Aorta (tissue), 5 donors: ENCODE measurements at regions of chr2 and their contacts with region 1.

Region 1: GRCh38 chr2:170873035-170873692 is 55.9 kb upstream of the GORASP2 start:
- DNase-seq: peak; percentile 76 to 89
- ATAC-seq: peak; percentile 86
- H3K4me3 ChIP-seq: no peak overlapping the region
- H3K27ac ChIP-seq: no peak overlapping the region
- H3K4me1 ChIP-seq: no peaks in the 10 kb centered on the region
- H3K27me3 ChIP-seq: no peaks in the 10 kb centered on the region

Region 2: DNA sequence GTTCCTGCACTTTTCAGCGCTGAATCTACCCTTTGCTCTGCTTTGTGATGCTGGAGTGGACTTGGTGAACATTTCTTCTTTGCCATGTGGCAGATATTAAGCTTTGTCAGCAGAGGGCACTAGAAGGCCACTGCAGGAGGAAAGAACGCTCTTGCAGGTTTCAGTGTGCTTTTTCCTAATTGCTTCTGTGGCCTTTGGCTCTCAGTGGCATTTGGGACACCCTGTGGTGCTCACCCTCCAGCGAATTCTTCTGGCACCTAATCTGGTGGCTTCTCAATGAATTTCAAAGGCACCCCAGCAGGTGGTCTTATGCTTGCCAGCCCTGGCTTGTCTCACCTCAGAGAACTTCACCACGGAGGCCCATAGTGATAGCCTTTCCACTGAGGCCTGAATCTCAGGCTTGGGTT is 548.5 kb before region 1 on chr2:
- intact Hi-C with region 1: loop called in 1 of 2 experiments (anchors 5 kb)
- DNase-seq: no peak
- ATAC-seq: no peak
- H3K4me3 ChIP-seq: no peak overlapping the region
- H3K27ac ChIP-seq: no peak overlapping the region
- H3K4me1 ChIP-seq: no peaks in the 10 kb centered on the region
- H3K27me3 ChIP-seq: no peaks in the 10 kb centered on the region

Region 3: DNA sequence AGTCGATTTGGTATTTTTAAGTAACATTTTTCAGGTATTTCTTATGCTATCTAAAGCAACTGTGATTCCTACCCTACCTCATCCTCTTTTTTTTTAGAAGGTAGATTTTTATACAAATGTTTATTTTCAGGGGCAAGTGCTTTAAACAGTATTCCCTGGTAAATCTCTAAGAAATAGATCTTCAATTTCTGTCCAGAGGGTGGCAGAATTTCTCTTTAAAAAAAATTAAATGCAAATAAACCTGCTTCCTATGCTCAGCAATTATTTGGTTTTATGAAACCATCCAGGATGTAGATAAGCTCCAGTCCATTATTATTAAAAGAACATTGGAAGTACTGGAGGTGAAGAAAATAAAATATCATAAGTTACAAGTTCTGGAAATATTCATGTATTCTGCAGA is 503.3 kb before region 1 on chr2:
- intact Hi-C with region 1: loop called in 1 of 2 experiments (anchors 2 kb)
- DNase-seq: no peak
- ATAC-seq: no peak
- H3K4me3 ChIP-seq: no peak overlapping the region
- H3K27ac ChIP-seq: no peak overlapping the region
- H3K4me1 ChIP-seq: no peaks in the 10 kb centered on the region
- H3K27me3 ChIP-seq: no peaks in the 10 kb centered on the region

Region 4: DNA sequence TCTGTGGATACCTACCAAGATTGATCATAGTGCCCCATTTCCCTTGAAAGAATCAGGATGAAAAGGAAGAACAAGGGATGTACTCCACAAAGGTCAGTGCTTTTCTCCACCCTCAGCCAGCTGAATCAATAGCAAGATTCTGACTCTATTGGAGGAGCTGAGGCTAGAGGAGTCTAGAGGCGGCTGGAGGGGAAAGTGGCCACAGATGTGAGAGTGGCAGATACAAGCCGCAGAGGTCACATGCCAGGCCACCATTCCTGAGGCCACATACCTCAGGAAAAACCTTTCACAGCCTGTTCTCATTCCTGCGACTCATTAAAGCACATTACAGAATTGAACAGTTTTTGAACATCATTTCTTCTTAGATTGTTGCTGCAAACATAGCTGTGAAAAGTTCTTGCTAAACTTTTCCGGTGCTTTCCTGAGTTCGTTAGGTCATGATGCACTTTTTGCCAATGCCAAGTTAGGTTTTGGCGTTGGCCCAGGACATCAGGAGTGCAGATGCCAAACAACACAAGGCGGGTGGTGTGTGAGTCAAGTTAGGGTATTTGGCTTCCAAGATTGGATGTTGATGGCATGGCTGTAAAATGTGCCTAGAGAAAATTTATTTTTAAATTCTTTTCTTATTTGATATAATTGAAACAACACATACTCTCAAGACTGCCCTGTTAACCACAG is 318.7 kb before region 1 on chr2:
- intact Hi-C with region 1: no loop called
- DNase-seq: peak; percentile 84 to 90
- ATAC-seq: peak; percentile 81
- H3K4me3 ChIP-seq: no peak overlapping the region
- H3K27ac ChIP-seq: peak overlapping the region; percentile 64 to 97
- H3K4me1 ChIP-seq: peaks cover 0 to 6% of the 10 kb centered on the region in 2 donors
- H3K27me3 ChIP-seq: no peaks in the 10 kb centered on the region

Region 5: DNA sequence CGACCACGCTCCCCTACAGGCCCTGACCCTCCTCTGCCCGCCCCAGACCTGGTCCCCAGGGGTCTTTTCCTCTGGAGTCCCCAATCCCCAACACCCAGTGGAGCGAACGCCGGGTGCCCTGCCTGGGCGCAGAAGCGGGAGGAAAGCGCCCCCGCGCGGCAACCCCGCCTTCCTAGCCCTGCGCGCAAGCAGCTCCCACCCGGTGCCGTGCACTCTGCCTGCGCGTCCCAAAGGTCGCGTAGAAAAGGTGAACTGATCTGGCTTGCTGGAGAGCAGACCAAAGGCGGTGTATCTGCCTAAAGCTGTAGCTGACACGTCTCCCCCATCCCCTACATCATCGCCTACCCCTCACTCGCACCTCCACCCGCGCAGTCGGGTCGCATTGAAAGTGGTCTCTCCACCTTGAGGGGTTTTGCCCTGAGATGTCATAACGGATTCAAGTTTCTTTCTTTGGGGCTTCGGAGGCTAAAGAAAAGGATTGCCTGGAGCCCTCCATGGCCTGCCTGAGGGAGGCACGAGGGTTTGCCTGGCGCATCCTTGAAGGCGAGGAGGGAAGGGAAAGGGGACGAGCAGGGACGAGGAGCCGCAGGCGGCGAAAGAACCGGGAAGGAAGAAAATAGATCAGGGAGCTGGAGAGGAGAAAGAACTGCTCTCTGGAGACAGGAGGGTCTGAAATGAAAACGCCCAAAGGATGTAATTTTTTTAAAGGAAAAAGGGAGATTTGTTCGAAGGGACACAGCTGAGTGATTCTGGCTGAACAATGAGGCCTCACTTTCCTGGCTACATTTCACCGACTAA is 50.7 kb before region 1 on chr2:
- intact Hi-C with region 1: loop called in 1 of 2 experiments (anchors 2 kb)
- DNase-seq: no peak
- ATAC-seq: no peak
- H3K4me3 ChIP-seq: no peak overlapping the region
- H3K27ac ChIP-seq: no peak overlapping the region
- H3K4me1 ChIP-seq: no peaks in the 10 kb centered on the region
- H3K27me3 ChIP-seq: no peaks in the 10 kb centered on the region